Endothelial cell of umbilical vein (primary cell): ENCODE measurements at regions of chr4 and their contacts with region 1.

Region 1: DNA sequence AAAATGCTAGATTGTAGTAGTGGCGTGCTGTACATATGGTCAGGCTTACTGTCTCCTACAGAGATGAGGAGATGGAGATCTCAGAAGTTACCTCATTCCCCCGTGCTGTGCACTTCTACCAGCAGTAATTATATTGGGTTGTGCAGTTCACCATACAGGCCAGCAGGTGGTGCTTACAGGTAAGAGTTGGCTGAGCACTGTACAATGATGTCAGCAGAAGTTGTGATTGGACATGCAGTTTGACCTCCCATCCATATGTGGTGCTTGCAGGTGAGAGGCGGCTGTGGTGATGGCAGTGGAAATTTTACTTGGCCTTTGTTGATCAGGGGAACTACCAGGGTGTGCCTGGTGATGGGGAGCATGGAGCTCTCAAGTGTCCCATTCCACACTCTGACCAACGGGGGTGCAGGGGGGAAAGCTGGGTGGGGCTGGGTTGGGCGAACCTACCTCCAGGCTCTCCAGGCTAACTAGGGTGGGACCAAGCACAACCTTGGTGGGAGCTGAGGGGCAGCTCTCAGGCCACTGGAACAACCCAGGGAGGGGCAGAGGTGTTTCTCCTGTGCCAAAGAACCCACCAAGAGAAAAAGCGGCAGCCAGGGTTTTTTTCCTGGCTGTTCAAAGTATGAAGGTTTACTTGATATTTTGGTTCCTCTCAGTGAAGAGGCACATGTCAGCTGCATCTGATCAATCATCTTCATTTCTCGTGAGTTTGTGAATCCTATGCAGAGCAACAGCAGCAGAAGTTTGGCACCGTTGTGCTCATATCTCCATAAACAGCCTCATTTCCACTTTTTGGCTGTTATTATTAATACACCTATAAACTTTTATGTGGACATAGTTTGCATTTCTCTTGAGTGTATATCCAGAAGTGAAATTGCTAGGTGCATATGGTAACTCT is 73.8 kb upstream of the FREM3 start:
- DNase-seq: peak; percentile 32
- H3K4me3 ChIP-seq: no peak overlapping the region
- H3K27ac ChIP-seq: no peak overlapping the region
- H3K4me1 ChIP-seq: no peaks in the 10 kb centered on the region
- H3K27me3 ChIP-seq: no peaks in the 10 kb centered on the region
- CTCF ChIP-seq: peak; percentile 61 to 63
- POLR2A ChIP-seq: no peak

Region 2: DNA sequence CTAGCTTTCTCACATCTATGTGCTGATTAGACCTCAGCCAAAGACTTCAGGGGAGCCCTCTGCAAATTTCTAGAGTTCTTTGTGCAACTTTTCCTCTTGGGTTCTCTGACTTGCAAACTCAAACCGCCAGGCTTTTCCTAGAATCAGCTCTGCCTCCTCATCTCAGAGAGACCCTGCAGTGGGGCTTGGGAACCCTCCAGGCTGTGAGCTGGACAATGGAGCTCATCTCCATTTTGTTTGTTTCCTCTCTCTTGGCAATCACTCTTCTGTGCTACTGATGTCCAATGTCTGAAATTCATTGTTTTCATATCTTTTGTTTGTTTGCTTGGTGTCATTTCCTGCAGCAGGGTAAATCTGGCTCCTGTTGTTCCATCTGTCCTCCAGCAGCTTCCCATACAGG is 211.9 kb after region 1 on chr4:
- CTCF ChIA-PET with region 1: interaction called, 11 read pairs
- POLR2A ChIA-PET with region 1: no interaction called
- dilution Hi-C with region 1: no loop called
- intact Hi-C with region 1: loop called (anchors 2 kb)
- DNase-seq: no peak
- H3K4me3 ChIP-seq: no peak overlapping the region
- H3K27ac ChIP-seq: no peak overlapping the region
- H3K4me1 ChIP-seq: no peaks in the 10 kb centered on the region
- H3K27me3 ChIP-seq: no peaks in the 10 kb centered on the region
- CTCF ChIP-seq: no peak
- POLR2A ChIP-seq: no peak

Region 3: GRCh38 chr4:144014808-144015207 is 240.6 kb after region 1 on chr4:
- CTCF ChIA-PET with region 1: no interaction called
- POLR2A ChIA-PET with region 1: no interaction called
- dilution Hi-C with region 1: no loop called
- intact Hi-C with region 1: loop called (anchors 2 kb)
- DNase-seq: no peak
- H3K4me3 ChIP-seq: no peak overlapping the region
- H3K27ac ChIP-seq: no peak overlapping the region
- H3K4me1 ChIP-seq: no peaks in the 10 kb centered on the region
- H3K27me3 ChIP-seq: no peaks in the 10 kb centered on the region
- CTCF ChIP-seq: no peak
- POLR2A ChIP-seq: no peak

Region 4: DNA sequence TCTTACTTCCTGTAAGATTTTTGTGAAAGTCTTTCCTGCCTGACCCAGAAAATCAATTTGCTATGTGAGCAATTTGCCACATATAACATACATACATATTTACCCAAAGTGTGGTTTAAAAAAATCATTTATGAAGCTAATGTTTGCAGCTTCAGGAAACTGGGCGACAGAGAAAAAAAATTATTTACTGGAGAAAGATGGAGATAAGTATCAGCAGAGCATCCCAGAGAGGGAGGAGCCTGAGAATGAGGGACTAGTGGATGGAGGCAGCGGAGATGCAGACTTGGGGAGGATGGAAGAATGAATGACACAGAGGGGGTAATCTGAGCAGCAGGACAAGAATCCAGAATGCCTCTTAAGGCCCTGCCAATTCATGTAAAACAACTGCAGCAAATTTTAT is 367.2 kb after region 1 on chr4:
- CTCF ChIA-PET with region 1: no interaction called
- POLR2A ChIA-PET with region 1: no interaction called
- dilution Hi-C with region 1: no loop called
- intact Hi-C with region 1: loop called (anchors 2 kb)
- DNase-seq: no peak
- H3K4me3 ChIP-seq: no peak overlapping the region
- H3K27ac ChIP-seq: no peak overlapping the region
- H3K4me1 ChIP-seq: no peaks in the 10 kb centered on the region
- H3K27me3 ChIP-seq: no peaks in the 10 kb centered on the region
- CTCF ChIP-seq: no peak
- POLR2A ChIP-seq: no peak